Activated CD4-positive, alpha-beta memory T cell treated with anti-CD3 and anti-CD28 coated beads, Interleukin-2, amount 10 ng/mL, durations not matched to agents 7 days and 5 days (primary cell): ENCODE measurements at regions of chr1 and their contacts with region 1.

Region 1: GRCh38 chr1:54944610-54945544 is 35.6 kb upstream of the TMEM61 start:
- DNase-seq: peak; percentile 82
- H3K4me3 Mint-ChIP-seq: no peak overlapping the region
- H3K27ac Mint-ChIP-seq: peak overlapping the region; percentile 28
- H3K4me1 Mint-ChIP-seq: peaks cover 36% of the 10 kb centered on the region
- H3K27me3 Mint-ChIP-seq: peaks cover 15% of the 10 kb centered on the region

Region 2: DNA sequence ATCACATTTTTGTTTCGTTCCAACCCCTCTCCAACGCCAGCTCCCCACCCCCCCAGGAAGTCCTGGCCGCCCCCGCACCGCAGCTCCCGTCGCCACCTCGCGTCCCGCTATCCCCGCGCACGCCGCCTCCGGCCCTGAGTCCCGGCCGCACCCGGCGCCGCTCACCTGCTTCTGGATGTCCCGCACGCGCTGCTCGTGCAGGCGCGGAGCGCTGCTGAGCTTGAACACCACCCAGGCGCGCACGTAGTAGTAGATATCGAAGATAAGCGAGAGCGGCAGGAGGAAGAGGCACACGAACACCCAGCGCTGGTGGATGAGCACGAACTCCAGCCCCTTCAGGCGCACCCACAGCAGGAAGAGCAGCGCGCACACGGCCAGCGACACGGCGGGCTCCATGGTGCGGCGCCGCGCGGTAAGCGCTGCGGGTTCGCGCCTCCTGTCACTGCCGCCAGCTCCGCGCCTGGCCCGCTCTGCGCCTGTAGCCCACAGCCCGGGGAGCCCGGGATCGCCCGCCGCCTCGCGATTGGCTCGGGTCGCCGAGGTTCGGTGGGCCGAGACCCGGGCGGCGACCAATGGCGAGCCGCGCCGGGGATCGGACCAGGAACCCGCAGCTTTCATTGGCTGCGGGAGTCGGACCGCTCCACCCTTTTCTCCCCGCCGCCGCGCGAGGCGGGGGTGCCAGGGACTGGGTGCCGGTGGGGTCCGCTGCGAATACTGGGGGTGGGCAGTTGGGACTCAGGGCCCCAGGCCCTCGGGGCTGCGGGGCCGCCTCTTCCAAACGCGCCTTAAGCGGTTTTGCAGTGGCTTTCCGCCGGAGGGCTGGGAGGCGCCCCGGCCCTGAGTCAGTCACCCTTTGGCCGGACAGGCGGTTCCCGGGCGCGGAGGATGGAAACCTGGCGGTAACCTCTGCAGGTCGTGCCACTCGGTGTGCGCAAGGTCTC is 57.9 kb before region 1 on chr1 and contains the start of gene DHCR24:
- CTCF ChIA-PET with region 1: interaction called, 19 read pairs
- POLR2A ChIA-PET with region 1: no interaction called
- DNase-seq: peak; percentile 87
- H3K4me3 Mint-ChIP-seq: peak within 1 kb of the TSS; percentile 88
- H3K27ac Mint-ChIP-seq: peak within 1 kb of the TSS; percentile 73
- H3K4me1 Mint-ChIP-seq: peaks cover 51% of the 10 kb centered on the region
- H3K27me3 Mint-ChIP-seq: peaks cover 20% of the 10 kb centered on the region
- total RNA-seq, gene DHCR24: 114 to 115 TPM

Region 3: GRCh38 chr1:54959241-54959640 is 14.4 kb after region 1 on chr1:
- CTCF ChIA-PET with region 1: interaction called, 19 read pairs
- POLR2A ChIA-PET with region 1: no interaction called
- DNase-seq: no peak
- H3K4me3 Mint-ChIP-seq: no peak overlapping the region
- H3K27ac Mint-ChIP-seq: no peak overlapping the region
- H3K4me1 Mint-ChIP-seq: peaks cover 4% of the 10 kb centered on the region
- H3K27me3 Mint-ChIP-seq: peaks cover 11% of the 10 kb centered on the region

Region 4: DNA sequence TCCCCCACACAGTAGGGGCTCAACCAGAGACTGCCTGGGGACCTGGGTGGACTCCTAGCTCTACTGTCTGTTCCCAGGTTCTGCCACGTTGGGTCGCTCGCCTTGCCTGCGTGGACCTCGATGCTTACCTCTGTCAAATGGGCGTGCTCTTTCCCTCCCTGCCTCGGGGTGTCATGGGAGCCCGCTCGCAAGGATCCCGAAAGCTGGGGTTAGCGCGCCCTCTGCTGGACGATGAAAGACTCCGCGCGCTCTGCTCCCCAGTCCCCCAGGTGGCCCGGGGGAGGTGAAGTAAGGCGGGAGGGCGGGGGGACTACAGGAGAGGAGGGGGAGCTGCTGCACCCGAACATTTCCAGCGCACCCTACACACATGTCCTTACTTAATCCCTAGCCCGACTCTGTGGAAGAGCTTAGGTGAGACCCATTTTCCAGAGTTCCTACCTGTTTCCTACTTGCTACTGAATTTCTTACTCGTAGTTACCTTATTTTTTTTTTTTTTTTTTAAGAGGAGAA is 51.5 kb after region 1 on chr1:
- CTCF ChIA-PET with region 1: interaction called, 353 read pairs
- POLR2A ChIA-PET with region 1: interaction called, 44 read pairs
- DNase-seq: peak; percentile 90
- H3K4me3 Mint-ChIP-seq: peak overlapping the region; percentile 51
- H3K27ac Mint-ChIP-seq: peak overlapping the region; percentile 94
- H3K4me1 Mint-ChIP-seq: peaks cover 39% of the 10 kb centered on the region
- H3K27me3 Mint-ChIP-seq: peaks cover 39% of the 10 kb centered on the region

Region 5: DNA sequence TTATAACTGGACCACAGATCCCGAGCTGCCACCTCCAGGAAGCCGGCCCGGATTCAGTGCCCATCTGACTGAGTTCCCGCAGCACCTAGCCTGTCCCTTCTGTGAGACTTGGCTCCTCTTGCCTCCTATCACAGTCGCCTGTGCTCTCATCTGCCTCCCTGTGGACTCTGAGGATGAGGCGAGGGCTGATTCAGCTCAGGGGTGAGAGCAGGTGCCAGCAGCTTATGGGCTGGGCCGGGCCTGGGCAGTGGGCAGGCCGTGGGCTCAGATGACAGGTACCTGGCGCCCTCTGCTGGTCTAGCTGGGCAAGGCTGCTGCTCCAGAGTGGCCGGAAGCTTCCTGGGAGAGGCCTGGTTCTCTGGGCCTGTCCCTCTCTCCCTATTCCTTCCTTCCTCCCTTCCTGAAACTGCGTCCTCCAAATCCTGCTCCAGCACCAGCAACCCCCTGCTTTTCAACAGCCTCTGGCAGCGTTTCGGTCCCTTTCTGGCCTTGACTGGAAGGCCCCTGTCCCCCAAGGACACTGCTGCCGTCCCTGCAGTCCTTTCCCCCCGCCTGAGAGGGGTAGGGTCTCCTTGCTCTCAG is 77.2 kb after region 1 on chr1:
- CTCF ChIA-PET with region 1: interaction called, 185 read pairs
- POLR2A ChIA-PET with region 1: interaction called, 3 read pairs
- DNase-seq: peak; percentile 76
- H3K4me3 Mint-ChIP-seq: no peak overlapping the region
- H3K27ac Mint-ChIP-seq: no peak overlapping the region
- H3K4me1 Mint-ChIP-seq: peaks cover 7% of the 10 kb centered on the region
- H3K27me3 Mint-ChIP-seq: peaks cover 10% of the 10 kb centered on the region

Region 6: GRCh38 chr1:55375617-55376258 is 430.9 kb after region 1 on chr1:
- CTCF ChIA-PET with region 1: no interaction called
- POLR2A ChIA-PET with region 1: no interaction called
- DNase-seq: peak; percentile 31
- H3K4me3 Mint-ChIP-seq: no peak overlapping the region
- H3K27ac Mint-ChIP-seq: no peak overlapping the region
- H3K4me1 Mint-ChIP-seq: peaks cover 5% of the 10 kb centered on the region
- H3K27me3 Mint-ChIP-seq: no peaks in the 10 kb centered on the region